Vagina (tissue), 2 donors: ENCODE measurements at regions of chr1 and their contacts with region 1.

Region 1: GRCh38 chr1:36231191-36231590 is 6.9 kb downstream of the THRAP3 start:
- DNase-seq: no peak
- H3K4me3 ChIP-seq: no peak overlapping the region
- H3K27ac ChIP-seq: no peak overlapping the region
- H3K4me1 ChIP-seq: peaks cover 82% of the 10 kb centered on the region
- H3K27me3 ChIP-seq: no peaks in the 10 kb centered on the region
- CTCF ChIP-seq: no peak
- POLR2A ChIP-seq: no peak

Region 2: DNA sequence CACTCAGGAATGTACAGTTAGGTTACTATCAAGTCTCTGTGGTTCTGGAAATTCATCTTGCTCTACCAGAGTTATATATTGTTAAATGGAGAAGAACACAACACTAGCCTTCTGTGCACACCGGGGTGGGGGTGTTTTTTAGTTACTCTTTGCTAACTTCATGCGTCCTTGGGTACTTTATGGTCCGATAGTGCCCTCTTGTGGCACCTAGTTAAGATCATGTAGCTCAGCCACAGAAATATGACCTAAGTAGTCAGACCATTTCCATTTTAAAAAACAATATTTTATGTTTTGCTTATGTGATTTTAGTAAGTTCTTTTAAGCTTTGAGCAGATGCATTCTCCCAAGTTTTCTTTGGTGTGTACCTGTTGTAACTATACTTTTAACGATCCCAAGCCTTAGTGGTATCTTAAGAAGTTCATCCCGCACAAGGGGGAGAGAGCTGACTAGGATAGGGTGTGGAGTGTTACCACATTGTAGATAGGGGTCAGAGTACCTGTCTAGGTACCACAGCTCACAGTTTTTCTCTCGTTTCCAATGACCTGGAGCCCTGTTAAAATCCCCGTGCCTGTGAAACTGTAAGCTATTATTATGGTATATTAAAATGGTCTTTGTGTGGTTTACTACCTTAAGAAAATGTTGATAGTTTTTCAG is 54.4 kb after region 1 on chr1:
- intact Hi-C with region 1: loop called (anchors 2 kb)
- DNase-seq: no peak
- H3K4me3 ChIP-seq: no peak overlapping the region
- H3K27ac ChIP-seq: no peak overlapping the region
- H3K4me1 ChIP-seq: peaks cover 10% of the 10 kb centered on the region
- H3K27me3 ChIP-seq: no peaks in the 10 kb centered on the region
- CTCF ChIP-seq: peak; percentile 45 to 79 (median 71)
- POLR2A ChIP-seq: no peak